Posterior cingulate gyrus (tissue), 11 donors: ENCODE measurements at regions of chr18 and their contacts with region 1.

Region 1: GRCh38 chr18:74116633-74117554 is 30.7 kb downstream of the FBXO15 start:
- DNase-seq: peak in 3 of 10 donors; percentile 32 to 79 (median 41)

Region 2: GRCh38 chr18:72762515-72763122 is 1354.3 kb before region 1 on chr18:
- intact Hi-C with region 1: loop called (anchors 10 kb)
- DNase-seq: no peak

Region 3: GRCh38 chr18:73842795-73843394 is 274.0 kb before region 1 on chr18:
- intact Hi-C with region 1: loop called (anchors 10 kb)
- DNase-seq: peak; percentile 39 to 92 (median 62)

Region 4: DNA sequence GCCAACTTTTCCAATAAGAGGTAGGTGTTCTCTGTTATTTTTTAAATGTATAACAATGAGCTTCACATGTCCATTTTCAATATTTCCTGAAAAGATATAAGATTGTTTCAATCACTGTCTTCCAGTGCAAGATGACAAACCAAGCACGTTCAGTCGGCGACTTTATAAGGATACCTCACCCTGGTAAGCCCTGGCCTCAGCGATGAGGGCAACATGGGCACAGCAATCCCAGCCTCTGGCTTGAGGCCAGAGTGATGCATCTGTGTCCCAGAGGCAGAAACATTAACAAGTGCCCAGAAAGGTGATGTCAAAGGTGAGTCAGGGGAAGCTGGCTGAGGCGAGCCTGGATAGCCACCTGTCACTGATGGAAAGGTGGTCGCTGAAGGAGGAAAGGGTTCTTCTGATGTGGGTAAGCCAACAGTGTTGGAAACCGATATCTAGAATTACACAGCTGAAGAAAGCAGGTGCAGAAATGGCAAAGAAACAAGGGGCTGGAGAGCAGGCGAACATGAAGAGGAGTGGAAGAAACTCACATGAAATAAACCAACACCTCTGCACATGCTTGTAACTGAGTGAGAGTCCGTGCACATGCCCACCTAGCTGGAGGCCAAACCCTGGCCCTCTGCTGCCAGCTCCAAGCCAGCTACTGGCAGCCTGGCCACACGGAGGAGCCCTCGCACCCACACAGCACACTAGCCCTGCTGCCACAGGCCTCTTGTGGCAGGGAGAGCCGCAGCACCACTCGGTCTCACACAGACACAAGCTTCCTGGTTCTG is 34.7 kb before region 1 on chr18:
- intact Hi-C with region 1: loop called (anchors 2 kb)
- DNase-seq: peak in 8 of 10 donors; percentile 52 to 95 (median 71)

Region 5: GRCh38 chr18:74171910-74172606 is 55.2 kb after region 1 on chr18:
- intact Hi-C with region 1: no loop called
- DNase-seq: no peak